Aorta (tissue), 5 donors: ENCODE measurements at regions of chrX and their contacts with region 1.

Region 1: DNA sequence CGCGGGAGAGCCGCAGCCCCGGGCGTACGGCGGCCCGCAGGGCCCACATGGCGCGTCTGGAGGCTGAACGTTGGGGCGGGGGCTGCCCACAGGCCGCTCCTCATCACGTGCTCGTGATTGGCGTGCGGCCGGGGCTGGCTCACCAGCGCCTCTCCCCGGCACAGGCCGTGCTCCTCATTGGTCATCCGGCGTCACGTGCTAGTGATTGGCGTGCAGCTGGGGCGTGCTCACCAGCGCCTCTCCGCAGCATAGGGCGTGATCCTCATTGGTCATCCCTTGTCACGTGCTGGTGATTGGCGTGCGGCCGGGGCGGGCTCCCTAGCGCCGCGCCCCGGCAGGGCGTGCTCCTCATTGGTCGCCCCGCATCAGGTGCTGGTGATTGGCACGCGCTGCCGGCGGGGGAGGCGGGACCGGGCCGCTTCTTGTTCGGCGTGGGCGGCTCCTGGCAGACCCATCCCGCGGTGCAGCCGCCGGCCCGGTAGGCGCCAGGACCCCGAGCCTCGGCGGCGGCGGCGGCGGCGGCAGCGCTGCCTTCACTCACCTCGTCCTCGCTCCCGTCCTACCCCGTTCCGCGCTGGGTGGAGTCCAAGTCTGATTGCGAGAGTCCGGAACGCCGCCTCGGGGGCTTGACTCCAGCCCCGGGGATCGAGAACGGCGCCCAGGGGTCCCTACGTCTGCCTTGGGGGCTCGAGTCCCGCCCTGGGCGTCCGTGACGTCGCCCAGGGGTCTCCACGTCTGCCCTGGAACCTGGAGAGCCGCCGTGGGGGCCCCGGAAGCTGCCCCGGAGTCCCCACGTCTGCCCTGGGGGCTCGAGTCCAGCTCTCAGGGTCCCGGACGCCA is at the start of gene GTPBP6:
- DNase-seq: peak; percentile 100
- ATAC-seq: peak; percentile 97
- H3K4me3 ChIP-seq: peak within 1 kb of the TSS; percentile 87 to 95
- H3K27ac ChIP-seq: peak within 1 kb of the TSS; percentile 23 to 97
- H3K4me1 ChIP-seq: peaks cover 0 to 3% of the 10 kb centered on the region in 2 donors
- H3K27me3 ChIP-seq: no peaks in the 10 kb centered on the region
- total RNA-seq, gene GTPBP6: 34.7 to 44.7 TPM

Region 2: DNA sequence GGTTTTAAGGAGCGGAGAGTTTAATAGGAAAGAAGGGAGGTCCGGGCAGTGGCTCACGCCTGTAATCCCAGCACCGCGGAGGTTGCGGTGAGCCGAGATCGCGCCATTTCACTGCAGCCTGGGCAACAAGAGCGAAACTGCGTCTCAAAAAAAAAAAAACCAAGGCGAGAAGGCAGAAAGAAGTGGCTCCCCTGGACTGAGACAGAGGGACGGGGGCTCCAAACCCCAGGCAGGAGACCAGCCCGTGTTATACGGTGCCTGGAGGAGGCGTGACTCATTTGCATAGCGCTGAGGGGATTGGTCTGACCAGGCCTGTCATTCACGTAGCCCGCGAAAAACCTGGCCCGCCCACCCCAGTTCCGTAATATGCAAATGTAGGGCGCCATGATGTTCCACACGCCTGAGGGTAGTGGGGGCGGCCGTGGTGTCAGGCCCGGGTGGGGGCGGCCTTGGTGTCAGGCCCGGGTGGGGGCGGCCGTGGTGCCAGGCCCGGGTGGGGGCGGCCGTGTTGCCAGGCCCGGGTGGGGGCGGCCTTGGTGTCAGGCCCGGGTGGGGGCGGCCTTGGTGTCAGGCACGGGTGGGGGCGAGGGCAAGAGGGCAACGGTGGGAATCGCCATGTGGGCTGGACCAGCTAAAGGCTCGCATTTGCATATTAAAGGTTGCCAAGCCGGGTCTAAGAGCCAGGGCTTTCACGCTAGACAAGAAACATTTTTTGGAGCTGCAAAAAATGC is 35.7 kb before region 1 on chrX:
- intact Hi-C with region 1: loop called in 1 of 2 experiments (anchors 5 kb)
- DNase-seq: peak; percentile 93 to 94
- ATAC-seq: peak; percentile 96
- H3K4me3 ChIP-seq: peak overlapping the region; percentile 39 to 82
- H3K27ac ChIP-seq: no peak overlapping the region
- H3K4me1 ChIP-seq: no peaks in the 10 kb centered on the region
- H3K27me3 ChIP-seq: no peaks in the 10 kb centered on the region

Region 3: DNA sequence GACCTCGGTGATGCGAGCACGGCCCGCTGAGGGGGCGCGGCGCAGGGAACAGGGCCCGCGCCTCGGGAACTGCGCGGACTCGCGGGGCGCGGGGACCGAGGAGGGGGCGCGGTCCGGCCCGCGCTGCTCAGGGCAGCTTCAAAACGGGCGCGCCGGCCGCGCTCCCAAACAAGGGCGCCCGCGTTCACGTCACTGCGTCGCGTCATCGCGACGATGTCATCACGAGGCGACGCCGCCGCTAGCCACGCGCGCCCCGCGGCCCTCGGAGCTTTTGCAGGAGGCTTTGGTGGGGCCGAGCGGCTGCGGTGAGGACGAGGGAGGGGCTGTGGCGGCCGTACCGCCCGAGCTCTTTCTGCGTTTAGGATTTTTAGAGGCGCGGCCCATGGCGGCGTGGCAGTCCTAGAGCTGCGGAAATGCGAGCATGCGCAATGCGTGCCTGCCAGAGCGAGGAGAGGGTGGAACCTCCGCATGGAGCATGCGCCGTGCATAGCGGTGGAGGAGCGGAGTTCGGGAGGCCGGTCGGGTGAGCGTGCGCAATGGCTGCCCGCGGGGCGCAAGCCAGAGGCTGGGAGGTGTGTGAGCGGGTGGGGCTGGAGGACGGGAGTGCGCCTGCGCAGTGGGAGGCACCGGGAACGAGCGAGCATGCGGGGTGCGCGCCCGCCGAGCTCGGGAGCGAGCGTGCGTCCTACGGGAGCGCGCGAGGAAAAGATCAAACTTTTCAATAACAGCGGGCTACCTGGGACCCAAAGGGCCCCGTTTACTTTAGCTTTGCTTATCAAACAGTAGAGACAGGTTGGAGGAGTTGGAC is 68.0 kb after region 1 on chrX and contains the start of gene PPP2R3B:
- intact Hi-C with region 1: loop called (anchors 5 kb)
- DNase-seq: peak; percentile 99 to 100
- ATAC-seq: peak; percentile 100
- H3K4me3 ChIP-seq: peak within 1 kb of the TSS; percentile 87 to 94
- H3K27ac ChIP-seq: peak within 1 kb of the TSS; percentile 76 to 94
- H3K4me1 ChIP-seq: no peaks in the 10 kb centered on the region
- H3K27me3 ChIP-seq: no peaks in the 10 kb centered on the region
- total RNA-seq, gene PPP2R3B: 7.8 to 19.1 TPM

Region 4: DNA sequence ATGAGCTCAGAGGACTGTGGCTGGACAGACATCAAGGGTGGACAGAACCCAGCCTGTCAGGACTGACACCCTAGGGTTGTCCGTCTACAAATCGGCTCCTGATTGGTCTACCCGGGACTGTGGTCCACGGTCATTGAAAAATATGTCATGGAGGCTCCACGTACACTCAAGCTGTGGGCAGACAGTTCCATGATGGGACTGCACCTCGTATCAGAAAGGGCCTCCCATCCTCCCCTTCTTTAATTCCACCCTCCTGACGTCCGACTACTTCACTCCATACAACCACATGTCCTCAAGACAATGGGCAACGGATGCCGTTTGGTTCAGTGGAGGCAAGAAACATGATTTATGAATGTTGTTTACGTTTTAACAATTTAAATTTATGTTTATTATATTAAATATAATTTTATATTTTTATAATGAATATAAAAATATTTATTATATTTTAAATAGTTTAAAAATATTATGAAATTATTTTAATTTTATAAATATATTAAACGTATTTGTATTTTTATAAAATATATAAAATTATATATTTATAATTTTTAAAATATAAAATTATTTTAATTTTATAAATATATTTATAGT is 253.7 kb after region 1 on chrX:
- intact Hi-C with region 1: no loop called
- DNase-seq: peak in 1 of 2 donors; percentile 37
- ATAC-seq: no peak
- H3K4me3 ChIP-seq: no peak overlapping the region
- H3K27ac ChIP-seq: no peak overlapping the region
- H3K4me1 ChIP-seq: no peaks in the 10 kb centered on the region
- H3K27me3 ChIP-seq: no peaks in the 10 kb centered on the region